ENCODE measurements at regions of chr5 and their contacts with region 1.

Region 1: GRCh38 chr5:149503006-149503405 is 48.2 kb downstream of the CSNK1A1 start:
- DNase-seq: no peak
- ATAC-seq: no peak
- H3K4me3 ChIP-seq: no peak overlapping the region
- H3K4me3 Mint-ChIP-seq: no peak overlapping the region
- H3K27ac ChIP-seq: no peak overlapping the region
- H3K27ac Mint-ChIP-seq: no peak overlapping the region
- H3K4me1 ChIP-seq: no peaks in the 10 kb centered on the region
- H3K4me1 Mint-ChIP-seq: no peaks in the 10 kb centered on the region
- H3K27me3 ChIP-seq: no peaks in the 10 kb centered on the region
- H3K27me3 Mint-ChIP-seq: no peaks in the 10 kb centered on the region
- CTCF ChIP-seq: no peak

Region 2: DNA sequence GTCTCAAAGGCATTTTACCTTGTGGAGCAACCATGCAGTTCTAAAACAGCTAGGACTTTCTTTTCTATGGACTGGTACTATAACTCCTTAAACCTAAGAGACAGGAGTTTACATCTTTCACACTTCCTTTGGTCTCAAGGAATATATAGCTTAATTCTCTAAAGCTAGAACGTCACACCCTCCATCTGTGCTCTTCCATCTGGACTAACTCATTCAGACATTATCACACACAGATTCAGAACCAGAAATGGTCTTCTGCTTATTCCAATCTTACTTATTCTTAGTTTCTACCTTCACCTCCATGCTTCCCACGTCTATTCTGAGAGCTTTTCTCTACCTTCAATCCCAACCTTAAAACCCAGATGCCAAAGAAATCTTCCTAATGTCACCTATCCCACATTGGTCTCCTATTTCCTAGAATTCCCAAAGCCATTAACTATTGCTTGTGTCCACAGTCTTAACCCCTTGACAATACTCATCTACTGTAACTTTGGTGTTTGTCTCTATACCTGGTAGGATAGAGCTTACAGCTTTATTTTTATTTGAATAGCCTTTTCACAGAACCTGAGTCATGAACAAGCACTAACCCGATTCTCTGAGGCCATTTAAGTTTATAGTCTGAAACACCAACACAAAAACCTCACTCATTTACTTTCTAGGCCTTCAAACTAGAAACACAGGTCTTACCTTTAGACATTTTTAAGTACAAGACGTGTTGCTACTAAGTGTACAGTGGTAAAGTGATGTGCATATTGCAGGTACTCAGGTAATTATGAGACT is 25.5 kb after region 1 on chr5:
- CTCF ChIA-PET with region 1: no interaction called
- POLR2A ChIA-PET with region 1: no interaction called
- intact Hi-C with region 1: loop called (anchors 2 kb)
- DNase-seq: no peak
- ATAC-seq: no peak
- H3K4me3 ChIP-seq: no peak overlapping the region
- H3K4me3 Mint-ChIP-seq: peak overlapping the region; percentile 11
- H3K27ac ChIP-seq: no peak overlapping the region
- H3K27ac Mint-ChIP-seq: no peak overlapping the region
- H3K4me1 ChIP-seq: peaks cover 26 to 30% of the 10 kb centered on the region in 2 donors
- H3K4me1 Mint-ChIP-seq: peaks cover 63% of the 10 kb centered on the region
- H3K27me3 ChIP-seq: no peaks in the 10 kb centered on the region
- H3K27me3 Mint-ChIP-seq: no peaks in the 10 kb centered on the region
- CTCF ChIP-seq: no peak